Activated naive CD4-positive, alpha-beta T cell treated with anti-CD3 and anti-CD28 coated beads for 36 hours (primary cell): ENCODE measurements at regions of chr10 and their contacts with region 1.

Region 1: DNA sequence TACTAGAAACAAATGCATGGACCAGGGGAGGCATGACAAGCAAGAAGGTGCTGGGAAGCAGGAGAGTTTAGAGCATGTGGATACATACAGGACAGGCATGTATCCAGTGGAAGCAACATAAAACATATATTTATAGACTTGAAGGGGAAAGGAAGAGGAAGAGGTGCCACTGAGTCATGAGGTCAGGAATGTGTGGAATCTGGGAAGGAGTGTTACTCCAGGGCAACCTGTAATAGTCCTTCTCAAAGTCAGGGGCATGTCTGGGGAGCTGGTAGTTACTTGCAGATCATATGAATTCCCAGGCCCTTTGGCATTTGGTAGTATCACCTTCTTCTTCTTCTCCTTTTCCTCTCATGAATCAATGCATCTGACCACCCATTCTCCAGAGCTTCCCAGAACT is 246.6 kb downstream of the XPNPEP1 start:
- DNase-seq: no peak
- H3K4me3 Mint-ChIP-seq: no peak overlapping the region
- H3K27ac Mint-ChIP-seq: no peak overlapping the region
- H3K4me1 Mint-ChIP-seq: no peaks in the 10 kb centered on the region
- H3K27me3 Mint-ChIP-seq: peaks cover 2% of the 10 kb centered on the region

Region 2: DNA sequence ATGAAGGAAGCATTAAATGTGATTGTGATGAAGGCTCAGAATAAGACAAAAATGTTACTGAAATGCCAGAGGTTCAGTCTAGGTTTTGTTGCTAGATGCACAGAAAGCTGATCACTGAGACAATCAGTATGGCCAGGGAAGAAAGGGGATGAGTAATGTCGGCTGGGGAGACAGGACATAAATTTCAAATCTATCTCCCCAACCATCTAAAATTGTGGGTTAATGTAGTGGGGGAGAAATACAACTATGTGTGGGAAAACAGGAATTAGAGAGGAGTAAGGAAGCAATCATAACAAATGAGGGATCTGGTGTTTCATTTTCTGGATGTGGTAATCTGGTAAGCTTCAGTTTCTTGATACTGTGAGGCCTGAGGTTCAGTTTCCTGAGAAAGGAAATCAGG is 864.4 kb before region 1 on chr10:
- CTCF ChIA-PET with region 1: no interaction called
- intact Hi-C with region 1: loop called (anchors 5 kb)
- DNase-seq: no peak
- H3K4me3 Mint-ChIP-seq: no peak overlapping the region
- H3K27ac Mint-ChIP-seq: no peak overlapping the region
- H3K4me1 Mint-ChIP-seq: no peaks in the 10 kb centered on the region
- H3K27me3 Mint-ChIP-seq: no peaks in the 10 kb centered on the region